PC-9 (cell line): ENCODE measurements at regions of chr1 and their contacts with region 1.

Region 1: DNA sequence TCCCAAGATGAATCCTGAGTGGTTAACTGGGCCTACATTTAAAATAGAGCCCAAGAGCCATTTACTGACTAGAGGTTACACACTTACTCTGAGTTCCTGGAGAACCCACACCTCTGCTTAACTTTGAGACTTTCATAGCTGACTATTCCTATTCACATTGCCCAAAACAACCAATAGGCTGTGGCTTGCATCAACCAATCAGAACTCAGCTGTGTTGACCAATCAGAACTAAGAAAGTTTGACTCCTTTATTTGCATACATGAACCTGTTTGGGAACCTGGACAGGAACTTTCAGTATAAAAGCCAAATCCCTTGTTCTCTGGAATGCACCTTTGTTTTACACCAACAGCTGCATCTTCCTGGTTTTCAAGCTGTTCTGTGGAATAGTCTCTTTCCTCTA is 9.5 kb downstream of the ZSWIM5 start:
- DNase-seq: peak in 1 of 2 experiments; percentile 37
- H3K4me3 ChIP-seq: no peak overlapping the region
- H3K27ac ChIP-seq: no peak overlapping the region
- H3K4me1 ChIP-seq: no peaks in the 10 kb centered on the region
- H3K27me3 ChIP-seq: no peaks in the 10 kb centered on the region
- CTCF ChIP-seq: no peak

Region 2: GRCh38 chr1:45206808-45207624 is 10.1 kb after region 1 on chr1:
- CTCF ChIA-PET with region 1: no interaction called
- POLR2A ChIA-PET with region 1: interaction called, 21 read pairs
- intact Hi-C with region 1: no loop called
- DNase-seq: no peak
- H3K4me3 ChIP-seq: peak overlapping the region; percentile 95; the same call in 1 of the 2 replicates
- H3K27ac ChIP-seq: no peak overlapping the region
- H3K4me1 ChIP-seq: peaks cover 13% of the 10 kb centered on the region
- H3K27me3 ChIP-seq: peaks cover 6% of the 10 kb centered on the region; the same call in 1 of the 2 replicates
- CTCF ChIP-seq: no peak

Region 3: GRCh38 chr1:45272983-45273382 is 76.1 kb after region 1 on chr1:
- CTCF ChIA-PET with region 1: no interaction called
- POLR2A ChIA-PET with region 1: no interaction called
- intact Hi-C with region 1: no loop called
- DNase-seq: peak in 1 of 2 experiments; percentile 55
- H3K4me3 ChIP-seq: no peak overlapping the region
- H3K27ac ChIP-seq: no peak overlapping the region
- H3K4me1 ChIP-seq: 0 out of 2 replicates have a peak, but pooled peaks cover 4% of the 10 kb centered on the region
- H3K27me3 ChIP-seq: no peaks in the 10 kb centered on the region
- CTCF ChIP-seq: no peak